PC-9 (cell line): ENCODE measurements at regions of chr1 and their contacts with region 1.

Region 1: GRCh38 chr1:153783233-153784190 is 8.3 kb downstream of the SLC27A3 start:
- DNase-seq: peak; percentile 66 to 90
- H3K4me3 ChIP-seq: peak overlapping the region; percentile 66
- H3K27ac ChIP-seq: peak overlapping the region; percentile 30
- H3K4me1 ChIP-seq: peaks cover 5% of the 10 kb centered on the region
- H3K27me3 ChIP-seq: no peaks in the 10 kb centered on the region
- CTCF ChIP-seq: no peak

Region 2: GRCh38 chr1:153510984-153511410 is 272.5 kb before region 1 on chr1:
- CTCF ChIA-PET with region 1: no interaction called
- POLR2A ChIA-PET with region 1: interaction called, 3 read pairs
- intact Hi-C with region 1: loop called (anchors 10 kb)
- DNase-seq: peak; percentile 52 to 82
- H3K4me3 ChIP-seq: no peak overlapping the region
- H3K27ac ChIP-seq: no peak overlapping the region
- H3K4me1 ChIP-seq: peaks cover 51% of the 10 kb centered on the region
- H3K27me3 ChIP-seq: no peaks in the 10 kb centered on the region
- CTCF ChIP-seq: peak; percentile 96

Region 3: GRCh38 chr1:154133256-154133655 is 349.7 kb after region 1 on chr1:
- CTCF ChIA-PET with region 1: no interaction called
- POLR2A ChIA-PET with region 1: interaction called, 15 read pairs
- intact Hi-C with region 1: no loop called
- DNase-seq: no peak
- H3K4me3 ChIP-seq: no peak overlapping the region
- H3K27ac ChIP-seq: no peak overlapping the region
- H3K4me1 ChIP-seq: no peaks in the 10 kb centered on the region
- H3K27me3 ChIP-seq: no peaks in the 10 kb centered on the region
- CTCF ChIP-seq: no peak